Vagina (tissue), 2 donors: ENCODE measurements at regions of chr3 and their contacts with region 1.

Region 1: GRCh38 chr3:138846262-138846791 is 11.6 kb upstream of the PIK3CB start:
- DNase-seq: no peak
- H3K4me3 ChIP-seq: no peak overlapping the region
- H3K27ac ChIP-seq: no peak overlapping the region
- H3K4me1 ChIP-seq: no peaks in the 10 kb centered on the region
- H3K27me3 ChIP-seq: no peaks in the 10 kb centered on the region
- CTCF ChIP-seq: no peak
- POLR2A ChIP-seq: no peak

Region 2: DNA sequence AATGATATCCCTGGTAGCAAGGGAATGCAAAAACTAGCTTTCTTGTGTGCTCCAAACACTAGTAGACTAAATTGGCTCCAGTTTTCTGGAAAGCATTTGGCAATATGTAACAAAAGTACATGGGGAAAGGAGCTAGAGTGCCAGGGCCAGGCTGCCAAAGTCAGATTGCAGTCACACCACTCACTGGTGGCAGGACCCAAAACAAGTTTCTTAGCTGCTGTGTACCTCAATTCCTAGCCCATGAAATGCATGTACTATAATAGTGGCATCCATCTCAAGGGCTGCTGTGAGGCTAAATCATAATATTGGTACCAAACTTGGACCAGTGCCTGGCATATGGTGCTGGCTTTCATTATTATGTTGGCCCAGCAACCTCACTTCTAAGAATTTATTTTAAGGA is 787.1 kb before region 1 on chr3:
- intact Hi-C with region 1: loop called (anchors 5 kb)
- DNase-seq: no peak
- H3K4me3 ChIP-seq: no peak overlapping the region
- H3K27ac ChIP-seq: no peak overlapping the region
- H3K4me1 ChIP-seq: no peaks in the 10 kb centered on the region
- H3K27me3 ChIP-seq: no peaks in the 10 kb centered on the region
- CTCF ChIP-seq: no peak
- POLR2A ChIP-seq: no peak